ENCODE measurements at regions of chr7 and their contacts with region 1.

Region 1: DNA sequence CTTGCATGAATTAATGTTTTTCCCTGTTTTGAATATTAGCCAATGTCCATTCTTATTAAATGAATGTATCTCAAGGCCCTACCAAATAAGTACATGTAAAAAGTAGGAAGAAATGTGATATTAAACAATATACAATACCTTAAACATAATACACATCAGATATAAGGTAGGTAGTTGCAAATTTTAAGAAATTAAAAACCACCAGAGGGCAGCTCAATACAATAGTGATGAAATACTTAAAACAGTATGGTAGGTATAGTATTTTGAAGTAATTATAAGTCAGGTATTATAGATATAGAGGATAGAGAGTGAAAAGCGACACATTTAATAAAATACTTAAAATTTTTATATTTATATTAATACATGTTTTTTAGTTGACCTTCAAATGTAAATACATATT is 43.6 kb upstream of the CDK14 start:
- DNase-seq: peak in 1 of 2 donors; percentile 18
- H3K4me3 ChIP-seq: no peak overlapping the region
- H3K27ac ChIP-seq: no peak overlapping the region
- H3K4me1 ChIP-seq: no peaks in the 10 kb centered on the region
- H3K27me3 ChIP-seq: no peaks in the 10 kb centered on the region
- CTCF ChIP-seq: peak in 3 of 7 experiments; percentile 13 to 29 (median 22)
- EP300 ChIP-seq: no peak
- POLR2A ChIP-seq: no peak

Region 2: GRCh38 chr7:90629297-90629918 is 76.9 kb after region 1 on chr7:
- intact Hi-C with region 1: loop called (anchors 10 kb)
- DNase-seq: peak in 1 of 2 donors; percentile 67
- H3K4me3 ChIP-seq: no peak overlapping the region
- H3K27ac ChIP-seq: no peak overlapping the region
- H3K4me1 ChIP-seq: peaks cover 0 to 20% (median 13%) of the 10 kb centered on the region in 4 donors
- H3K27me3 ChIP-seq: no peaks in the 10 kb centered on the region
- CTCF ChIP-seq: peak in 5 of 7 experiments; percentile 33 to 57 (median 45)
- EP300 ChIP-seq: no peak
- POLR2A ChIP-seq: no peak

Region 3: GRCh38 chr7:91034459-91035368 is 482.2 kb after region 1 on chr7:
- intact Hi-C with region 1: loop called (anchors 10 kb)
- DNase-seq: peak; percentile 74 to 85
- H3K4me3 ChIP-seq: no peak overlapping the region
- H3K27ac ChIP-seq: no peak overlapping the region
- H3K4me1 ChIP-seq: peaks cover 0 to 13% (median 6%) of the 10 kb centered on the region in 4 donors
- H3K27me3 ChIP-seq: no peaks in the 10 kb centered on the region
- CTCF ChIP-seq: peak in 5 of 7 experiments; percentile 36 to 71 (median 57)
- EP300 ChIP-seq: no peak
- POLR2A ChIP-seq: no peak

Measured in stomach (tissue), 19 donors.